Caco-2 (cell line): ENCODE measurements at regions of chr7 and their contacts with region 1.

Region 1: DNA sequence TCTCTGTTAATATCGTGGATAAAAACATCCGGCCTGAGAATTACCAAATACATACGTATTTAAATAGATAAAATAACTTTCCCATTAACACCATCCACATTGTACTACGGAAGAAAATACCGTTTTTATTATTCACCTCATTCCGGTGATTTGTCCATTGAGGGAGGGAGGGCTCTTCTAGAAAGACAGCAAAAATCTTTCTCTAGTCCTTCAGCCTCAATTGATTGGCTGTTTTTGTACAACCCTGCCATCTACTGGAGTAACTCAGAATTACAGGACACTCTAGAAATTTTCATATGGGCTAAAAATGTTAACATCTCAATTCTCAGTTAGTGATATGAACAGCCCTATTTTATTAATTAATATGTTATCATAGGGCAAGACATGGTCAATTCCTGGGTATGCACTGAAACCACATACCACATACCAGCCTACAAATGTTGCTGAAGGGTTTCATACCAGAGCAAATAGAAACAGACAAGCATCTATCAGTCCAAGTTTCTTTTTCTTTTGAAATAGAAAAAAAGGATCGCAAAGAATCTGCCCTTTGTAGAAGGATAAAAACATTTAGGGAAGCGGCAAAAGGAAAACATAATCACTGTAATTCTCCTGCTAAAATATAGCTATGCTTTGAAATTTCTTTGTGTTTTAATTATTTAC is 55.8 kb upstream of the CDCA7L start:
- DNase-seq: peak in 1 of 2 experiments; percentile 60
- H3K4me3 ChIP-seq: no peak overlapping the region
- H3K4me3 Mint-ChIP-seq: no peak overlapping the region
- H3K27ac Mint-ChIP-seq: no peak overlapping the region
- H3K4me1 ChIP-seq: no peaks in the 10 kb centered on the region
- H3K4me1 Mint-ChIP-seq: no peaks in the 10 kb centered on the region
- H3K27me3 ChIP-seq: no peaks in the 10 kb centered on the region; the same call in 1 of the 2 replicates
- H3K27me3 Mint-ChIP-seq: peaks cover 12% of the 10 kb centered on the region
- CTCF ChIP-seq: peak; percentile 63 to 75

Region 2: GRCh38 chr7:21782996-21783395 is 218.5 kb before region 1 on chr7:
- CTCF ChIA-PET with region 1: no interaction called
- POLR2A ChIA-PET with region 1: no interaction called
- intact Hi-C with region 1: loop called (anchors 5 kb)
- DNase-seq: no peak
- H3K4me3 ChIP-seq: no peak overlapping the region
- H3K4me3 Mint-ChIP-seq: no peak overlapping the region
- H3K27ac Mint-ChIP-seq: no peak overlapping the region
- H3K4me1 ChIP-seq: no peaks in the 10 kb centered on the region
- H3K4me1 Mint-ChIP-seq: no peaks in the 10 kb centered on the region
- H3K27me3 ChIP-seq: no peaks in the 10 kb centered on the region
- H3K27me3 Mint-ChIP-seq: no peaks in the 10 kb centered on the region
- CTCF ChIP-seq: no peak

Region 3: DNA sequence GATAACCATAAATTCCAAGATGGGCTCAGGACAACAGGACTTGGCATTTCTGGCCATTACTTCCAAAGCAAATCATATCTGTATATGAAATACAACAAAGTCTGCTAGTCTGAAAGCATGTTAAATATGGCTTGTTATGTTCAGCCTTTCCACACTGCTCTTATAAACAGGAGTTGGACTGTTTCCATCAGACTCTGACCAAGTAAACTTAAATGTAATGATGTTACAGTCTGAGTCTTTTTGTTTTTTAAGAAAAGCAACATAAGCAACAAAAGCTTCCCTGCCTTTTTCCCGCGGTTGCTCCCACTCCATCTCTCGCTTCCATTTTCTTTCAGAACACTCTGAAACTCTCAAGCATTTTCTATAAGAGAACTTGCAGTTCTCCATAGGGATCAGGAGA is 47.7 kb before region 1 on chr7:
- CTCF ChIA-PET with region 1: no interaction called
- POLR2A ChIA-PET with region 1: no interaction called
- intact Hi-C with region 1: loop called (anchors 5 kb)
- DNase-seq: no peak
- H3K4me3 ChIP-seq: no peak overlapping the region
- H3K4me3 Mint-ChIP-seq: no peak overlapping the region
- H3K27ac Mint-ChIP-seq: no peak overlapping the region
- H3K4me1 ChIP-seq: no peaks in the 10 kb centered on the region
- H3K4me1 Mint-ChIP-seq: peaks cover under 1% of the 10 kb centered on the region
- H3K27me3 ChIP-seq: no peaks in the 10 kb centered on the region
- H3K27me3 Mint-ChIP-seq: peaks cover 8% of the 10 kb centered on the region
- CTCF ChIP-seq: no peak

Region 4: GRCh38 chr7:22082886-22083703 is 81.6 kb after region 1 on chr7:
- CTCF ChIA-PET with region 1: no interaction called
- POLR2A ChIA-PET with region 1: no interaction called
- intact Hi-C with region 1: loop called (anchors 5 kb)
- DNase-seq: peak; percentile 85 to 96
- H3K4me3 ChIP-seq: peak overlapping the region; percentile 56
- H3K4me3 Mint-ChIP-seq: peak overlapping the region; percentile 81
- H3K27ac Mint-ChIP-seq: peak overlapping the region; percentile 40
- H3K4me1 ChIP-seq: no peaks in the 10 kb centered on the region
- H3K4me1 Mint-ChIP-seq: peaks cover 6% of the 10 kb centered on the region
- H3K27me3 ChIP-seq: no peaks in the 10 kb centered on the region
- H3K27me3 Mint-ChIP-seq: peaks cover 7% of the 10 kb centered on the region
- CTCF ChIP-seq: peak; percentile 94 to 95

Region 5: DNA sequence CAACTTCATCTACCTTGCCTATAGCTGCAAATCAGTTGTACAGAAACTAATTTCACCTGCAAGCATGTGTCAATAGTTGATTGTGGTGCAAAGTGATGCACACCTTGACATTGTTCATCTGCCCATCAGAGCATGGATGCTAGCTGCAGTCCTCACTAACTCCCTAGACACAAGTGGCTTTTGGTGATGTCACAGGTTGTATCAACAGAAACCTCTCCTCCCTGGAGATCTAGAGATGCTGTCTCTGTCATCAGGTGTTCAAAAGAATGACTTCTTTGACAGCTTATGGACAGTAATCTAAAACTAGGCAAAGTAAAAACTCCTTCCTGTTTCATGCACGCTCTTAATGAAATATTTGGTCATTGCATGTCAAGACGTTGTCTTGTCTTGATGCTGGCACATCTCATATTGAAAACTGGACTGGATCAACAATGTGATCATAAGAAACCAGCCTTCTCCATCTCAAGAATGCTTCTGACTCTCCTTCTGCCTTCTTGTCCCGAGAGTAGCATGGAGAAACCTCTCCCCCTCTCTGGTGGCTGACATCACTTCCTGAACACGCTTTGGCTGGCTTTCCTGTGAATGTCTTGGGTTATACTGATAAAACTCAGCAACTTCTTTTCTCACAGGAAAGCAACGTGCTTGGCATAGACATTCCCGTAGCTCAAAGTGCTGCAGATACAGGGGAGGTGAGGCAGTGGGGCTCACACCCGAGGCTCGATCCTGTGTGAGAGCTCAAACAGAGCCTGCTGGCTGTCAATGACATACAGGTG is 120.4 kb after region 1 on chr7:
- CTCF ChIA-PET with region 1: no interaction called
- POLR2A ChIA-PET with region 1: no interaction called
- intact Hi-C with region 1: no loop called
- DNase-seq: no peak
- H3K4me3 ChIP-seq: no peak overlapping the region
- H3K4me3 Mint-ChIP-seq: no peak overlapping the region
- H3K27ac Mint-ChIP-seq: no peak overlapping the region
- H3K4me1 ChIP-seq: no peaks in the 10 kb centered on the region
- H3K4me1 Mint-ChIP-seq: no peaks in the 10 kb centered on the region
- H3K27me3 ChIP-seq: no peaks in the 10 kb centered on the region
- H3K27me3 Mint-ChIP-seq: no peaks in the 10 kb centered on the region
- CTCF ChIP-seq: no peak